Activated CD4-positive, alpha-beta T cell treated with anti-CD3 and anti-CD28 coated beads, Interleukin-2, amount 10 ng/mL, durations not matched to agents 7 days and 5 days (primary cell): ENCODE measurements at regions of chr6 and their contacts with region 1.

Region 1: DNA sequence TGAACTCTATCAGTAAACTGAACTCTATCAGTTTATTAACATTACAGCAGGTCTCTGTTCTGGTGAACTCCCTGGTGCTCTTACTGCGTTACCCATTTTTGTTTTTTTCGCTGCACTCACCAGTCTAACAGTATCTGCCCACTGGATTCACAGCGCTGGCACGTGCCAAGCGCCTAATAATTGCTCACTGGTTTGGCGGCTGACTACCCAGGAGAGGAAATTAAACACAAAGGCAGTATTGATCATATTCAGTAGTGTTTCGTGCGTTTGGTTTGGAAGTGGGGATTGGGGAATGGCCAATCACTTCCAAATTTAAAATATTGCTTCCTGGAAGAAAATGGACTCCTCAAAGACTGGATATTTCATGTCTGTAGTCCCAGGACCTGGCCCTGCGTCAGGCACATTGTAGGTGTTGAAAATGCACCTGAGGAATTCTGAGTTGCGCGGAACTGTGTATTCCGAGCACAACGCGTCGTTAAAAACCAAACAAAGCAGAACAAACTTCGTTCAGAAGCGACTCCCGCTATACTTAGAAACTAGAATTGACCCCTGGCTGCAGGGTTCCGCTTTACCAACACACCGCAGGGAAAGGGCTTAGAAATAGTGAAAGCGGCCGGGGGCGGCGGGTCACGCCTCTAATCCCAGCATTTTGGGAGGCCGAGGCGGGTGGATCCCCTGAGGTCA is 1.1 kb upstream of the RPS12 start:
- DNase-seq: peak; percentile 37
- H3K4me3 Mint-ChIP-seq: peak overlapping the region; percentile 99
- H3K27ac Mint-ChIP-seq: peak overlapping the region; percentile 100
- H3K4me1 Mint-ChIP-seq: peaks cover 43% of the 10 kb centered on the region
- H3K27me3 Mint-ChIP-seq: peaks cover 6% of the 10 kb centered on the region

Region 2: DNA sequence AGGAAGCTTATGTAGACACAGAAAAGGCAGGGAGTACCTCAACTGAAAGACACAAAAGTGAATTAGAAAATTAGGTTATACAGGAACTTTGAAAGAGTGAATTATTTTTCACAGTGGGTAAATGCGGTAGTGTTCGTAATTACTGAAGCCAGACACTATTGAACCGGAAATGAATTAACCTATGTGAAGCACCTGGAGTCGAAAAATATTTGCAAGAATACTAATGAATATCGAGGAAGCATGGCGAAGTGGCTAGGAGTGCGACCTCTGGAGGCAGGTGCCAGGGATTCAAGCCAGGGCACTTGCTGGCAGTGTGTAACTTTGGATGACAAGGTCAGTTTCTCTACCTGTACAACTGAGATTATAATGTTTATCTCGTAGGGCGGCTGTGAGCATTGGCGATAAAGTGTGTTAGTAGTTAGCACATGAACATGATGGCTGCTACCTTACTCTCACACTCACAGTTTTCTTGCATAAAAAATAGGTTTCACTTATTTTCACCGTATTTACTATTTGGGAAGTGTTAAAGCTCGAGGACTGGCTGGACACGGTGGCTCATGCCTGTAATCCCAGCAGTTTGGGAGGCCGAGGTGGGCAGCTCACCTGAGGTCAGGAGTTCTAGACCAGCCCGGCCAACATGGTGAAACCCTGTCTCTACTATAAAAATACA is 14.3 kb before region 1 on chr6:
- CTCF ChIA-PET with region 1: interaction called, 13 read pairs
- POLR2A ChIA-PET with region 1: interaction called, 8 read pairs
- DNase-seq: peak; percentile 70
- H3K4me3 Mint-ChIP-seq: no peak overlapping the region
- H3K27ac Mint-ChIP-seq: no peak overlapping the region
- H3K4me1 Mint-ChIP-seq: peaks cover 24% of the 10 kb centered on the region
- H3K27me3 Mint-ChIP-seq: peaks cover 3% of the 10 kb centered on the region

Region 3: DNA sequence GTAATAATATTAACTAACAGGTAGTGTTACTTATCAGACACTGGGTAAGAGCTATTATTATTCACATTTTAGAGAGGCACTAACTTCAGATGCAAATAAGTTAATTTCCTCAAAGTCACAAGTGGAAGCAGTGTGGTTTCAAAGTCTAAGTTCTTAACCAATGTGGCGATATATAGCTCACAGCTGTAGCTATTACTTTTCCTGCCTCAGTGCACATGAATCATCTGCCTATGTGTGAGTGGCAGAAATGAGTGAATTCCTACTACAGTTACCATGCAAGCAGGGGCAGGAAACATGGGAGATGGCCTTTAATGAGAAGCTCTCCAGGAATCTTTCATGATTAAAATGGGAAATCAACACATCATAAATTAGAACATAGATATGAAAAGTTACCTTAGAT is 301.7 kb after region 1 on chr6:
- CTCF ChIA-PET with region 1: no interaction called
- POLR2A ChIA-PET with region 1: no interaction called
- DNase-seq: no peak
- H3K4me3 Mint-ChIP-seq: no peak overlapping the region
- H3K27ac Mint-ChIP-seq: no peak overlapping the region
- H3K4me1 Mint-ChIP-seq: no peaks in the 10 kb centered on the region
- H3K27me3 Mint-ChIP-seq: no peaks in the 10 kb centered on the region